ENCODE measurements at regions of chr1 and their contacts with region 1.

Region 1: DNA sequence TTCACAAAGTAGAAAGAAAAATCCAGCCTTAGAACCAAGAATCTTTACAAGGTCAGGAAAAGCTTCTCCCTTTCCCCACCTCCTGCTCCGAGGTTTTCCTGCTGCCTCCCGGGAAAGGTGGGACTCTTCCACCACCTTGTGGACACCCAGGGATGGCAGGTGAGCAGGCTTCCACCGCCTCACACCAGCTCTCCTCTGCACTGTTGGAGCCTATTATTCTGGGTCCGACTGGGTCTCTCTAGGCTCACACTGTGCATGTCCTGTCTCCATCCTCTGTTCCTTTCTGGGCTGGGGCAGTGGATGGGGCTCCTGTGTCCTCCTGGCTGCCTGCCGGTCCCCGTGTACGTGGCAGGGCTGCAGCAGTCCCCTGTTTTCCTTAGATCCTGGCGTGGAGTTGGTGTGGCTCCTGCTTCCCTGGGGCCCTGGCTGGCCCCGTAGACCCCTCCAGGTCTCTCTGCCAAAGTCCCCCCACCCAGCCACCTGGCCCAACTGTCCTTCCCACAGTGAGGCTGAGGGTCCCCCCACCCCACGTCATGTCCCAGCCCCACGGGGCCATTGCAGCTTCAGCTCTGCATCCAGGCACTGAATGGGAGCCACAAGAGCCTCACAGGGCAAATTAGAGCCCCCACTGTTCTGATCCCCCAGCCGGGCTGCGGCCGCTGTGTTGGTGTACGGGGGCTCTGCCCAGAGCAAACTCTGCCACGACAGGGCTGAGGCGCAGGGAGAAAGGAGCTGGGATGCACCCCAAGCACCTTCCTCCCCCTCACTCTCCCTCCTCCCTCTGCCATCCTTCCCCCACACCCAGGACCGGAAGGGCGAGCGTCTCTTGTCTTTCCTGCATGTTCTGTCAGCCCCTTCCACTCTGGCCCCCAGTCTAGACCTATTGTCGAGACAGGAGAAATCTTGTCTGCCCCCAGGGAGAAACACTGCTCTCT is 3.3 kb upstream of the SLC45A1 start:
- DNase-seq: peak; percentile 69 to 93
- H3K4me3 ChIP-seq: no peak overlapping the region
- CTCF ChIP-seq: peak in 1 of 3 donors; percentile 49
- POLR2A ChIP-seq: no peak

Region 2: GRCh38 chr1:7808253-7808844 is 506.3 kb before region 1 on chr1:
- intact Hi-C with region 1: no loop called
- DNase-seq: no peak
- H3K4me3 ChIP-seq: no peak overlapping the region
- CTCF ChIP-seq: no peak
- POLR2A ChIP-seq: no peak

Region 3: DNA sequence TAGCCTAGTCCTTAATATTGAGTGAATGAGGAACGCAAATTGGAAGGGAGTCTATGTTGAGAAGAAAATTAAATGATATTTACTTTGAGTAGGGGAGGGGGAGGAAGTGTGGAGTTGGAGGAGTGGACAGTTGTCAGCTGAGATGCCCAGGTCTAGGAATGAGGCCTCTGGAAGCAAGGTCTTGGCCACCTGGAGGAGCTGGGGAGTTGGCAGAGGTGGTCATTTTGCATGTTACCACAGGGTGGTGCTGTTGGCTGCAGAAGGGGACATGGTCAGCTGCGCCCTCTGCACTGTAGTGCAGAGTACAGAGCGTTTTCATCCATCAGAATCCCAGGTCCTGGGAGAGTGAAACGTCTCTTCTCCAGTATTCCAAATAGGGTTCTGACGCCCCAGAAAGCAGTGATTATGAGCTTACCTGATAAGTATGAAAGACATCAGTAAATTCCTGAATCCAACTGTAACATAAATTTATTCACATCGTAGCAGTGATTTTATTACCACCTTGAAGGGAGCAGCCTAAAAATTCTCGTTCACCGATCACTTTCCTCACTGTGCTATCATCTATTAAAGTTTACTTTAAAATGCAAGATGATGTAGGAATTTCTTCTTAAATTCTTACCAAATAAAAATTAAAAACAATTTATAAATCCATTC is 339.3 kb before region 1 on chr1:
- intact Hi-C with region 1: loop called (anchors 5 kb)
- DNase-seq: peak; percentile 64 to 92
- H3K4me3 ChIP-seq: no peak overlapping the region
- CTCF ChIP-seq: peak in 1 of 3 donors; percentile 84
- POLR2A ChIP-seq: no peak

Region 4: DNA sequence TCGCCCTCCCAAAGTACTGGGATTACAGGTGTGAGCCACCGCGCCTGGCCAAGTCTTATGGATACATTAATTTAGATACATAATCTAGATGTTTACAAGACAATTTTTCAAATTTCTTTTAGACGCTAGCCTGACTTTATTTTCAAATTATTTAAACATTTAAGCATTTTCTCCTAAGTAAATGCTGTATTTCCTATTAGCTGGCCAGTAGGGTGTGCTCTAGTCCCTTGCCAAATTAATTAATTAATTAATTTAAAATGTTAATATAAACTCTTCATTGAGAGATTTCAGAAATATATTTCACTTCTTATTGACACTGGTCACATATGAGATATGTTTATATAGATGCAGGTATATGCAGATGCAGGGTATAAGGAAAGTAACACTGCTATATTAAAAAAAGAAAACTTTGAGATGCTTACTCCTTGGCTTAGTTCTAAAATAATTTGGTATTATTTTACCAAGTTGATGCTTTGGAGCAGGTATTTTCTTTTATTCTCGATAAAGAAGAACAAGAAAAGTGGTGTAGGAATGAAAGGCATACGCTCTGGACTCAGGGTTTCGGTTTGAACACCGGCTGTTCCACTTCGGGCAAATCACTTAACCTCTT is 283.3 kb before region 1 on chr1:
- intact Hi-C with region 1: loop called (anchors 5 kb)
- DNase-seq: no peak
- H3K4me3 ChIP-seq: no peak overlapping the region
- CTCF ChIP-seq: peak in 1 of 3 donors; percentile 47
- POLR2A ChIP-seq: no peak

Region 5: GRCh38 chr1:8239306-8240023 is 75.1 kb before region 1 on chr1:
- intact Hi-C with region 1: loop called (anchors 10 kb)
- DNase-seq: no peak
- H3K4me3 ChIP-seq: no peak overlapping the region
- CTCF ChIP-seq: no peak
- POLR2A ChIP-seq: no peak

Region 6: DNA sequence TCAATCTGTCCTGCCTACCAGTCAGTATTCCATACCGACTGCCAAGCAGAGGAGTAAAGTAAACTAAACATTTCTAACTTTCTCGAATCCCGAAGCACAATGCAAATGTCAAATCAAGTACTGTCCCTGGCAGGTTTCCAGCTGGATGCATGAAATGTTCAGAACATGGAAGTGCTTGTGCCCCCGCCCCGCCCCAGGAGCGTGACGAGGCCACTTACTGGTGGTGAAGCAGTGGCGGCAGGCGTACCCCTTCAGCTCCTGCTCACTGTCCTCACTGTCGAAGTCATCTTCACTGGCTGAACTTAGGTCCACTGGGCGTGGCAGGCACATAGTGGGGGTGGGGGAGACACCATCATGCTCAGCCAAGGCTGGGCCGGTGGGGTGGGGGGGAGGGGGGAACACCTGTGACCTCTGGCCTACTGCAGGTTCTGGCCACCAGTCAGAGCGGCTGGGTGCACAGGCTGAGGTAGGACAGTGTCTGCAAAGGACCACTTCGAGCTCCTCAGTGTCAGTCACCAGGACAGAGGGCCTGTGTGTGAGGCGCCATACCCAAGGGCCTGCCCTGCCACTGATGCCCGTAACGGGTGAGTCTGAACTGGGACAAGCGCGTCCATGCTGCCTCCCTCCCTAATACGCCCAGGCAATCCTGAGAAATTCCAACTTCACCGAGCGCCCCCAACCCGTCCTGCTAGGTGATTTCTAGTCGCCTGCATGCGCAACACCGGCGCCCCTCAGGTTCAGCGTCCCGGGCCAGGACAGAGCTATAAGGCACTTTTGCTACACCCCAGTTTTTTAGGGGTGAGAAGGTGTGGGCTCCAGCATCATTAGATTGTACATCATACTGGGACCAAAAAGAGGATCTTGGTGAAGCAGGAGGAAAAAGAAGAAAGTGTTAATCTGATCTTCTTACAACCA is 50.2 kb after region 1 on chr1:
- intact Hi-C with region 1: no loop called
- DNase-seq: peak in 1 of 2 donors; percentile 87
- H3K4me3 ChIP-seq: no peak overlapping the region
- CTCF ChIP-seq: no peak
- POLR2A ChIP-seq: no peak

Region 7: DNA sequence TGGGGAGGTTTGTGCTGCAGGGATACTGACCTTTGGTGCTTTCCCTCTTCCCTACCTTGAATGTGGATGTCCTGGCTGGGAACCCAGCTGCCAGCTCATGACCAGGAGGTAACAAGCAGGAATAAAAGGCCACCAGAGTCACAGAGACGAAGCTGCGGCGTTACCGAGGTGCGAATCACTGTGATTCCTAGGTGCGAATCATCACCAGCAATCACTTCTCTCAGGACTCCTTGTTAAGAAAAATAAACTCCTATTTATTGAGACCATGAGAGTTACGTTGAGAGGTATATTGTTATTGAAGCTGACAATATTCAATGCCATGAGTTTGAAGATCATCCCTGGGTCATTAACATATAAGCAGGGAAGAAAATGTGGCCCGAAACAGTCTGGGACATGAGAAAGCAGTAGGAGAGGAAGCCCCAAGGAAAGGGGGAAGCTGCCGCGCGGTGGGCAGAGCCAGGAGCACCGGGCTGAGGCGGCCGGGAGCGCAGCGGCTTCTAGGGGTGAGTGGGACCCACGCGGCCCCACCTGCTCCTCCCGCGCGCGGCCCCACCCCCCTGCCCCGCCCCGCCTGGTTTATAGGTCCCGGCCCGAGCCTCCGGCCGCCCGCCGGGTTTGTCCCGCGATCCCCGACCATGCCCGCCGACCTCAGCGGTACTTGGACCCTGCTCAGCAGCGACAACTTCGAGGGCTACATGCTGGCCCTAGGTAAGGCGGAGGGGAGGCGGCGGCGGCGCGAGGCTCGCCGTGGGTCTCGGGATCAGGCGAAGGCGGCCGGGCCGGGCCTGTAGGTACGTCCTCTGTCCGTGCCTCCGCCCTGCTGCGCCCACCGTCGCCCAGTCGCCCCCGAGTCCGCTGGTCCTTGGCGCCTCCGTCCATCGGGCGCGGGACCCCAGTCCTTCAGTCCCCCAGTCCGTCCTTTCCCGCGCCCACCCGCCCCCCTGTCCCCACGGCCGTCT is 1682.3 kb after region 1 on chr1 and contains the start of gene RBP7:
- intact Hi-C with region 1: no loop called
- DNase-seq: peak in 1 of 2 donors; percentile 84
- H3K4me3 ChIP-seq: peak within 1 kb of the TSS; percentile 15
- CTCF ChIP-seq: no peak
- POLR2A ChIP-seq: no peak
- total RNA-seq, gene RBP7: 12.7 to 20.6 (median 18.8) TPM